Cardiac septum (tissue), 1 donor: ENCODE measurements at regions of chr19 and their contacts with region 1.

Region 1: GRCh38 chr19:11496391-11497163 is 9.1 kb downstream of the ZNF653 start:
- DNase-seq: no peak

Region 2: GRCh38 chr19:11587302-11587974 is 90.9 kb after region 1 on chr19:
- intact Hi-C with region 1: loop called (anchors 5 kb)
- DNase-seq: peak; percentile 87